ENCODE measurements at regions of chr7 and their contacts with region 1.

Region 1: DNA sequence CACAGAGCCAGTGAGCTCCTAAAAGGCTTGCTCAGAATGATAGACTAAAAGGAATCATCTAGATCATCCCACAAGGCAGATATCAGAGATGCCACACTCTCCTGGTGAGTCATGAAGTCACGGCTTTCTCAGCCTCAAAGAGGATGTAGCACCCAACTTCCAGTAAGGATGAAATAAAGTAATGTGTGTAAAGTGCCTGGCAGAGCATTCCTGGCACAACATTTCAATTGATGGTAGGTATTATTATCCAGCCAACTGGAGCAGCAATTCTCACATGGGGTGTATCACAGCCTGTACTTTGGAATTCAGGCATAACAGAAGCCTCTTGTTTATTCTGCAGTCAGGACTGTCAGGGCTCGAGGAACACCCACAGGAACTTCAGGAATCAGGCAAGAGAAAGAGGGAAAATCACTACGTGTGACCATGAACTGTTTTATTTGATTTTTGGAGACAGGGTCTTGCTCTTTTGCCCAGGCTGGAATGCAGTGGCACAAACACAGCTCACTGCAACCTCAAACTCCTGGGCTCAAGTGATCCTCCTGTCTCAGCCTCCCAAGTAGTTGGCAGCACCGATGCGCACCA is 5.3 kb upstream of the NAT16 start:
- DNase-seq: no peak
- H3K4me3 Mint-ChIP-seq: no peak overlapping the region
- H3K27ac Mint-ChIP-seq: no peak overlapping the region
- H3K4me1 Mint-ChIP-seq: peaks cover 12% of the 10 kb centered on the region
- H3K27me3 Mint-ChIP-seq: peaks cover 7% of the 10 kb centered on the region
- CTCF ChIP-seq: no peak

Region 2: DNA sequence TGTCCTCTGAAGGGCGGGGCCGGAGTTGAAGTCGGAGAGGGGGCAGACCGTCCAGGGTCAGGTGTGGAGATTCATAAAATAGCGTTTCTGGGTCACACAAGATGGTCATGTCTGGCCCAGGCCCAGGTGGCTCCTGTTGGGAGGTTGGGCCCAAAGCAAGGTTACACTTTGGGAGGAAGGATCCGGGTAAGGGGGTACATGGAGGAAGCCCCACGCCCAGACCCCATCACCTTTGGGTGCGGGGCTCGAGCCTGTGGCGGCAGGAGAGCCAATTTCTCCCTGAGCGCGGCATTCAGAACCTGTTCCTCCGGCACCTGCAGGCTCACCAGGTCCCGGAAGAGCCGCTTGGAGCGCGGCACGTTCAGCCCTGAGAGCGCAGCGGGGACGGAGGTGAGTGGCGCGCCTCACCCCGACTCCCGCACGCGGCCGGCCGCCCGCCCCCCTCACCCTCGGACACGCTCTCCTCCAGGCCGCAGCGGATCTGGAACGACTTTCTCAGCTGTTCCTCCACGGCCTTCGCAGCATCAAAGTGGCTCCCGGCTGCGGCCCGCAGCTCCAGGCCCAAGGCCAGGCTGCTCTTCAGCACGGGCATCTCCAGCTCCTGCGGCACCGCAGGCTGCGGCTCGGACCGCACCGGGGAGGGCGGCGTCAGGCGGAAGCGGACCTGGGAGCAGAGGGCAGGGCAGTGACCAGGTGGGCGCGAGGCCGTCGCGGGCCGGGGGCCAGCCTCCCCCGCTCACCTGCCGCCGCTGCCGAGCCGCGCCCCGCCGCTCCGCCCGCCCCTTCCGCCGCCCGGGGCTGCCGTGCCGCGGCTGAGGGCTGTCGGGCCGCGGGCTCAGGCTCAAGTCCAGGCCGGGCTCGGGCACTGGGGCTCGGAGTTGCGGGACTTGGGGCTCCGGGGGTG is 749.7 kb before region 1 on chr7:
- CTCF ChIA-PET with region 1: no interaction called
- POLR2A ChIA-PET with region 1: no interaction called
- intact Hi-C with region 1: no loop called
- DNase-seq: peak; percentile 38
- H3K4me3 Mint-ChIP-seq: peak overlapping the region; percentile 95
- H3K27ac Mint-ChIP-seq: peak overlapping the region; percentile 96
- H3K4me1 Mint-ChIP-seq: peaks cover 36% of the 10 kb centered on the region
- H3K27me3 Mint-ChIP-seq: no peaks in the 10 kb centered on the region
- CTCF ChIP-seq: no peak

Region 3: DNA sequence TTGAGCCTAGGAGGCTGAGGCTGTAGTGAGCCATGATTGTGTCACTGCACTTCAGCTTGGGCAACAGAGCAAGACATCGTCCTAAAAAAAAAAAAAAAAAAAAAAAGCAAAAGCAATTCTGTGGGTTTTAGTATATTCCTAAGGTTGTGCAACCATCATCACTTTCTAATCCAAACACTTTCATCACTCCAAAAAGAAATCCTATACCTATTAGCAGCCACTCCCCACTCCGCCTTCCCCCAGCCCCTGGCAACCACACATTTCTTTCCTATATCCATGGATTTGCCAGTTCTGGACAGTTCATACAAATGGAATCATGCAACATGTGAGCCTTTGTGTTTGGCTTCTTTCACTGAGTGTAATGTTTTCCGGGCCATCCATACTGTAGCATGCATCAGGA is 431.6 kb before region 1 on chr7:
- CTCF ChIA-PET with region 1: no interaction called
- POLR2A ChIA-PET with region 1: no interaction called
- intact Hi-C with region 1: no loop called
- DNase-seq: peak; percentile 38
- H3K4me3 Mint-ChIP-seq: no peak overlapping the region
- H3K27ac Mint-ChIP-seq: no peak overlapping the region
- H3K4me1 Mint-ChIP-seq: peaks cover 6% of the 10 kb centered on the region
- H3K27me3 Mint-ChIP-seq: peaks cover 20% of the 10 kb centered on the region
- CTCF ChIP-seq: no peak

Region 4: GRCh38 chr7:101201695-101202604 is 16.6 kb after region 1 on chr7:
- CTCF ChIA-PET with region 1: interaction called, 22 read pairs
- POLR2A ChIA-PET with region 1: no interaction called
- intact Hi-C with region 1: no loop called
- DNase-seq: no peak
- H3K4me3 Mint-ChIP-seq: no peak overlapping the region
- H3K27ac Mint-ChIP-seq: no peak overlapping the region
- H3K4me1 Mint-ChIP-seq: no peaks in the 10 kb centered on the region
- H3K27me3 Mint-ChIP-seq: peaks cover 12% of the 10 kb centered on the region
- CTCF ChIP-seq: no peak